ENCODE measurements at regions of chr3 and their contacts with region 1.

Region 1: GRCh38 chr3:32876920-32877319 is 59.1 kb downstream of the TRIM71 start:
- DNase-seq: no peak
- H3K4me3 ChIP-seq: no peak overlapping the region
- CTCF ChIP-seq: no peak

Region 2: GRCh38 chr3:32842531-32842931 is 34.4 kb before region 1 on chr3:
- in situ Hi-C with region 1: loop called (anchors 5 kb)
- DNase-seq: no peak
- H3K4me3 ChIP-seq: no peak overlapping the region
- CTCF ChIP-seq: no peak